SK-N-SH (cell line): ENCODE measurements at regions of chr12 and their contacts with region 1.

Region 1: GRCh38 chr12:11688831-11689230 is 39.4 kb downstream of the ETV6 start:
- DNase-seq: no peak
- H3K4me3 ChIP-seq: no peak overlapping the region
- H3K27ac ChIP-seq: peak overlapping the region in 1 of 2 experiments; percentile 39; a peak in 1 of 4 replicates
- H3K4me1 ChIP-seq: peaks cover 4 to 28% of the 10 kb centered on the region in 2 experiments; a peak in 3 of 4 replicates
- H3K27me3 ChIP-seq: no peaks in the 10 kb centered on the region
- CTCF ChIP-seq: no peak
- EP300 ChIP-seq: no peak
- RAD21 ChIP-seq: no peak

Region 2: GRCh38 chr12:11648831-11649702 is 39.8 kb before region 1 on chr12 and contains the start of gene ETV6:
- CTCF ChIA-PET with region 1: no interaction called
- POLR2A ChIA-PET with region 1: interaction called, 13 read pairs
- DNase-seq: peak; percentile 85
- H3K4me3 ChIP-seq: peak within 1 kb of the TSS; percentile 88 to 90
- H3K27ac ChIP-seq: peak within 1 kb of the TSS; percentile 100
- H3K4me1 ChIP-seq: peaks cover 13 to 17% of the 10 kb centered on the region in 2 experiments
- H3K27me3 ChIP-seq: no peaks in the 10 kb centered on the region
- CTCF ChIP-seq: no peak
- EP300 ChIP-seq: no peak; a peak in 1 of 4 replicates
- RAD21 ChIP-seq: no peak
- polyA plus RNA-seq, gene ETV6: 4.0 and 5.2 TPM in 2 replicates